Psoas muscle (tissue), 8 donors: ENCODE measurements at regions of chr3 and their contacts with region 1.

Region 1: DNA sequence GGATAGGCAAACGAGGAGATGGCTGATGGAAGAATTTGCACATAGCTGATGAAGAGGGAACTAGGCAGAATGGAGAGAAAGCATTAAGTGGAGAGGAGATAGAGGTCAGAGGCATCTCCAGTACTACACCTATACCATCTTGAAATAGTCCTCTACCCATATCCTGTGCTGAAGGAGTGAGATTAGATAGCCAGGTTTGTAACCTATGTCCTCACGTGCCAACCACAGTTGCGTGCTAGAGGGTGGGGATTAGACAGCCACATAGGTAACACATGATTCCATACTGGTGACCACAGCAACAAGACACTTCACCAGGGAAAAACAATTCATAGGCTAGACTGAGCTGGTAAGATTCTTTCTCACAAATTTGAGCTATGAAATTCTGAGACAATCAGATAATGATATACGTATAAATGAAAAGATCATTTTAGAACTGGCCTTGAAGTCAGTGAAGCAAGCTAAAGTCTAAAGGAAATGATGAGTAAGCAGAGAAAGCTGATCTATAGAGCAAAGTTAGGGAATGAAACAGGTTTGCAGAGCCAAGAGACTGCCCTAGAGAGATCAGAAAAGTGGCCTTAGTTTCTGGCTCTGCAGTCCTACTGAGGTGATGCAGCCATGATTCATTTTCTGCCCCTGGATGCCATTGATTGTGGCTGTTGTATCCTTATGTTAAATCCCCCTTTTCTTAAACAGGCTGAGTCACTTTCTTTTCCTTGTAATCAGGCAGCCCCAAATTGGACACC is 17.7 kb downstream of the MYNN start:
- DNase-seq: no peak
- ATAC-seq: no peak
- H3K4me3 ChIP-seq: no peak overlapping the region
- H3K27ac ChIP-seq: no peak overlapping the region
- H3K4me1 ChIP-seq: no peaks in the 10 kb centered on the region
- H3K27me3 ChIP-seq: no peaks in the 10 kb centered on the region
- CTCF ChIP-seq: no peak

Region 2: DNA sequence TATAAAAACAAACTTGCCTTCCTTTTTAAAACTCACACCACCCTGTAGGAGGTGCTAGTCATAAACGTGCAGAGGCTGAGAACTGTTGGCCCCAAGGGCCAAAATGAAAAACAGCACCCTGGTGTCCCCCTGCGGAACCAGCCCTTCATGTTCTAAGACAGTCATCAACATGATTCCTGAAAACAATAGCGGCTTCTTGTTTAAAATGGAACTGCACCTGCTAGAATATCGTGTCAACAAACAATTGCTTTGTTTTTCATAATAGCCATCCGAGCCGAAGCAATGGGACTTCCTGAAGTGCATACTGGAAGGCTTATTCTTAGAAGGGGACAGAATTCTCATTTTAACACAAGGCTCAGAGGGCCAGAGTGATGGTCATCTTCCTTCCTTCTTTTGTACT is 171.1 kb before region 1 on chr3:
- intact Hi-C with region 1: no loop called
- DNase-seq: no peak
- ATAC-seq: peak in 2 of 4 donors; percentile 35 to 36
- H3K4me3 ChIP-seq: no peak overlapping the region
- H3K27ac ChIP-seq: peak overlapping the region; percentile 50
- H3K4me1 ChIP-seq: no peaks in the 10 kb centered on the region
- H3K27me3 ChIP-seq: no peaks in the 10 kb centered on the region
- CTCF ChIP-seq: peak; percentile 10

Region 3: GRCh38 chr3:169966428-169966950 is 175.6 kb after region 1 on chr3 and contains the start of gene SEC62:
- intact Hi-C with region 1: loop called in 1 of 2 experiments (anchors 10 kb)
- DNase-seq: peak; percentile 91 to 97
- ATAC-seq: peak; percentile 98 to 99 (median 99)
- H3K4me3 ChIP-seq: peak within 1 kb of the TSS; percentile 86
- H3K27ac ChIP-seq: peak within 1 kb of the TSS; percentile 91
- H3K4me1 ChIP-seq: peaks cover 40% of the 10 kb centered on the region
- H3K27me3 ChIP-seq: no peaks in the 10 kb centered on the region
- CTCF ChIP-seq: peak; percentile 36
- total RNA-seq, gene SEC62: 61.5 to 78.2 (median 71.5) TPM

Region 4: DNA sequence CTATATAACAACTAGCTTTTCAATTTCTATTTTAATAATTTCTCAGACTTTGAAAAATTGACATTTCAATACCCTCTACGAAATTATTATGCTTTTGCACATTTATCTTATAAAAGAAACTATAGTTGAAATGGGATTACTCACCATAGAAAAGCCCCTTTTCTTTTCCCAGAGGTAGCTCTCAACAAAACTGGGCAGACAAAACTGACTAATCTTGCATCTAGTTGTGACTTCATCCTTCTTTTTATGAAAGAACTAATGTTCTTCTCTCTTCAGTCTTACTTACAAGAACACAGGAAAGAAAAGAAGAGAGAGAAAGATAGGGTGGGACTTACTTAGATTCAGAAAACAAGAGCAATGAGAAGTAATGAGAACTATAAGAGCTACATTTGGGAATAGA is 307.9 kb after region 1 on chr3:
- intact Hi-C with region 1: loop called (anchors 5 to 10 kb)
- DNase-seq: no peak
- ATAC-seq: no peak
- H3K4me3 ChIP-seq: no peak overlapping the region
- H3K27ac ChIP-seq: no peak overlapping the region
- H3K4me1 ChIP-seq: no peaks in the 10 kb centered on the region
- H3K27me3 ChIP-seq: no peaks in the 10 kb centered on the region
- CTCF ChIP-seq: no peak

Region 5: DNA sequence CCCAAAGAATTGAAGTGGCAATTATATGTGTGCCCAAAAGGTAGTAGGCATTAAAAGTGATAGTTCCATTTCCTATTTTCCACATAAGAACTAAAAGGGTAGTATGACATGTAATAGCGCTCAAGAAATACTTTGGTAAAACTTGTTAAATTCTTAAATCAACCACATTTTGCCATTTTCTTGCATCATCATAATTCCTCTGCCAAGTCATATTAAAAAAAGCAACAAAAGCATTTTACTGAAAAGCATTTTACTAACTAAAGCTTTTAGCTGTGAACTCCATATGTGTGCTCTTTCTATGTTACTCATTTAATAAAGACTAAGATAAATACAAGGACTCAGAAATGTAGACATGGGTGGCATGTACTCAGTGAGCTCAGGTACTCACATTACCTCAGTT is 317.1 kb after region 1 on chr3:
- intact Hi-C with region 1: loop called in 1 of 2 experiments (anchors 10 kb)
- DNase-seq: no peak
- ATAC-seq: no peak
- H3K4me3 ChIP-seq: no peak overlapping the region
- H3K27ac ChIP-seq: no peak overlapping the region
- H3K4me1 ChIP-seq: no peaks in the 10 kb centered on the region
- H3K27me3 ChIP-seq: no peaks in the 10 kb centered on the region
- CTCF ChIP-seq: no peak